ENCODE measurements at regions of chr1 and their contacts with region 1.

Region 1: DNA sequence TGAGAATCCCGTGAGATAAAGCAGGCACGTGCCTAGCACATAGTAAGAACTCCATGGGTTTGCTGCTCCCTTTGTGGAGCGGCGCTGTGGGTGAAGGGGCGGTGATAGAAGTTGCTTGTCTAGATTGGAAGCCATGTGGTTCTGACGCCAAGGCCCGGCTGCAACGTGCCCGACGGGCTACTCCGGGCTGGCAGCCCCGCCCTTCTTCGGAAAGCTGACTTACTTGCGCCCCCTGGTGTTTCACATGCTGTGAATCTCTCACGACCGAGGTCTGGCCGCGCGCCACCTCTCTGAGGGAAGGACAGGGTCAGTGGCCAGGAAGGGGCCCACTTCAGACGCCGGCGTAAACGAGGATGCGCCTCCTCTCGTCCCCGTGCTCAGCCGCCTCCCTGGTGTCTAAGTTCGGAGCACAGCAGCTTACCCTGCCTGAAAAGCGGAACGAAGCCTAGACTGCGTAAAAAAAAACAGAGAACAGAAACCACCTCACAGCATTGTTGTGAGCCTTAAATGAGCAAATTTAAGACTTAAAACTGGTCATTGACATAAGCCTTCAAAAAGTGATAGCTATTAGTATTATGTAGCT is 42.6 kb upstream of the WNT2B start:
- DNase-seq: peak; percentile 87
- CTCF ChIP-seq: peak; percentile 87

Region 2: GRCh38 chr1:112030157-112030556 is 436.0 kb before region 1 on chr1:
- CTCF ChIA-PET with region 1: no interaction called
- POLR2A ChIA-PET with region 1: no interaction called
- DNase-seq: no peak
- CTCF ChIP-seq: no peak

Region 3: DNA sequence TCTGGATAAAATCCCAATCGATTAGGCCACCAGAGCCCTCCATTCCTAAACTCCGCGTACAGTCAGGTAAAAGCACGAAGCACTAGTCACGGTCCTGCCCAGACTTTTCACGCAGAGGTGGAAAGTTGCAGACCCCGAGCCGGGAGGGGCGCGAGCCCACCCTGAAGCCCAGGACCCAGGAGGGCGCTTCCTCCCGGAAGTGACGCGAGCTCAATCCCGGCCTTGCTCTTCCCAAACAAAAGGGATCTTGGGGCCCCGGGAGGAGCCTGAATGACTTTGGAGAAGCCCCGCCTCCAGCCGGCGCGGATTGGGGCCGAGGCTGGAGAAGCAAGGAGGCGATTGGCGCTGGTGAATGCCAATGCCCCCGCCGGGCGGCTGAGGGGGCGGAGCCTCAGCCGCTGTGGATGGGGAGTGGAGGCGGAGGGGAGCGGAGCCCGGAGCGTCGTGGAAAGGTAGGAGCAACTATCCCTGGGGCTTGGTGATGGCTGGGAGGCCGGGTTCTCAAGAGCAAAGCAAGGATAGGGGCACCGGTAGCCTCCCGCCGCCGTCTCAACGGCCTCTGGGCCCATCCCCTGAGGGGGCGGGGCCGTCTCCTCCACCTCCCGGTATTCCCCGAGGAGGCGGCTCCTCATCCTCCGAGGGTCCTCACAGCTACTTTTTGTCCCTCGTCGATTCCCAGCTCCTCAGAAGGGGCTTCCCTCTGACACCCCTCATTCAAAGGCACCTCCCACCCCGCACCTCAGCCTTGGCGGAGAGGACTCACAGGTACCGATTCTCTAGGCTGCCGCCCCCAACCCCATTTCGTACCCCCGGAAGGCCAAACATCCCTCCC is 70.1 kb before region 1 on chr1 and contains the start of gene CTTNBP2NL:
- CTCF ChIA-PET with region 1: interaction called, 76 read pairs
- POLR2A ChIA-PET with region 1: interaction called, 9 read pairs
- DNase-seq: peak; percentile 93
- CTCF ChIP-seq: no peak

Region 4: GRCh38 chr1:112445596-112445995 is 20.6 kb before region 1 on chr1:
- CTCF ChIA-PET with region 1: interaction called, 23 read pairs
- POLR2A ChIA-PET with region 1: no interaction called
- DNase-seq: no peak
- CTCF ChIP-seq: no peak

Region 5: GRCh38 chr1:113021430-113022086 is 555.4 kb after region 1 on chr1:
- CTCF ChIA-PET with region 1: no interaction called
- POLR2A ChIA-PET with region 1: no interaction called
- DNase-seq: no peak
- CTCF ChIP-seq: no peak